Activated naive CD8-positive, alpha-beta T cell treated with anti-CD3 and anti-CD28 coated beads, Interleukin-2, amount 10 ng/mL, durations not matched to agents 7 days and 5 days (primary cell): ENCODE measurements at regions of chr10 and their contacts with region 1.

Region 1: DNA sequence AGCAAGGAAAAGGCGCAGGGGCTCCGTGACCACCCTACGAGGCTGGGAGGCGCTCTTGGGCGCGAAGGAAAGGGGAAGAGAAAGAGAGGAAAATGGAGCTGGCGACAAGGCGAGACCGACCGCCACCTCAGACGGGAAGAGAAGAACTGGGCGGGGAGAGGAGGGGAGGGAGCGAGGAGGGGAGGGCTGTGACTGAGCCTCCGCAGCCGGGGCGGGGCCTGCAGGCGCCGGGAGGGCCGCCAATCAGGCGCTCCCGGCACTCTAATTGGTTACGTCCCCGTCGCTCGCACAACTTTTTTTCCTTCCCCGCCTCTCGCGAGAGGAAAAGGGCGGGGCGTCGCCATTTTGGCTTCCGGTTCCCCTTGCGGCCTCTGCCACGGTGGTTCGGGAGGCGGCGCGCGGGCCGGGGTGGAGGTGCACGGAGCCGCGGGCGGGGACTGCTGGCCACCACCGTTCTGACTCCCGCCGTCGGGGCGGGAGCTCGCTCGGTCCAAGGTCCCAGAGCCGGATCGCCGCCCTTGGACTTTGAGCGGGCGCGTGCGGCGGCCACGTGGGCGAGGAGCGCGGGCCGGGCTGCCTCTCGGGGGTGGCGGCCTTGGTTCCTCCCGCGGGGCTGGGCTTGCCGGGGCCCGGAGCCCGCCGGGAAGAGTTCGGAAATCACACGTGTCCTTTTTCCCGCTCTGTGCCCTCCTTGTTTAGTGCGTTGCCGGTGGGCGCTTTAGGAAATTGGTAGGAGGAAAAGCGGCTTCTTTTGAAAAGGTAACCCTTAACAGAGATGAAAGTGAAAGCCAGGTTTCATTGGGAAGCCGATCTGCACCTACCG is at the start of gene GDI2:
- DNase-seq: peak; percentile 98
- ATAC-seq: peak; percentile 90
- H3K4me3 Mint-ChIP-seq: peak within 1 kb of the TSS; percentile 94
- H3K27ac Mint-ChIP-seq: peak within 1 kb of the TSS; percentile 96
- H3K4me1 Mint-ChIP-seq: peaks cover 52% of the 10 kb centered on the region
- H3K27me3 Mint-ChIP-seq: no peaks in the 10 kb centered on the region
- total RNA-seq, gene GDI2: 187 to 194 TPM

Region 2: GRCh38 chr10:5692461-5693358 is 120.8 kb before region 1 on chr10:
- POLR2A ChIA-PET with region 1: interaction called, 11 read pairs
- DNase-seq: peak; percentile 80
- ATAC-seq: peak; percentile 88
- H3K4me3 Mint-ChIP-seq: peak overlapping the region; percentile 77
- H3K27ac Mint-ChIP-seq: peak overlapping the region; percentile 74
- H3K4me1 Mint-ChIP-seq: peaks cover 31% of the 10 kb centered on the region
- H3K27me3 Mint-ChIP-seq: no peaks in the 10 kb centered on the region

Region 3: GRCh38 chr10:5776136-5776880 is 37.2 kb before region 1 on chr10:
- POLR2A ChIA-PET with region 1: interaction called, 17 read pairs
- DNase-seq: no peak
- ATAC-seq: peak; percentile 18
- H3K4me3 Mint-ChIP-seq: peak overlapping the region; percentile 78
- H3K27ac Mint-ChIP-seq: peak overlapping the region; percentile 93
- H3K4me1 Mint-ChIP-seq: peaks cover 53% of the 10 kb centered on the region
- H3K27me3 Mint-ChIP-seq: no peaks in the 10 kb centered on the region

Region 4: GRCh38 chr10:5788969-5789368 is 24.5 kb before region 1 on chr10:
- POLR2A ChIA-PET with region 1: interaction called, 10 read pairs
- DNase-seq: peak; percentile 39
- ATAC-seq: peak; percentile 77
- H3K4me3 Mint-ChIP-seq: peak overlapping the region; percentile 17
- H3K27ac Mint-ChIP-seq: peak overlapping the region; percentile 62
- H3K4me1 Mint-ChIP-seq: peaks cover 30% of the 10 kb centered on the region
- H3K27me3 Mint-ChIP-seq: no peaks in the 10 kb centered on the region

Region 5: DNA sequence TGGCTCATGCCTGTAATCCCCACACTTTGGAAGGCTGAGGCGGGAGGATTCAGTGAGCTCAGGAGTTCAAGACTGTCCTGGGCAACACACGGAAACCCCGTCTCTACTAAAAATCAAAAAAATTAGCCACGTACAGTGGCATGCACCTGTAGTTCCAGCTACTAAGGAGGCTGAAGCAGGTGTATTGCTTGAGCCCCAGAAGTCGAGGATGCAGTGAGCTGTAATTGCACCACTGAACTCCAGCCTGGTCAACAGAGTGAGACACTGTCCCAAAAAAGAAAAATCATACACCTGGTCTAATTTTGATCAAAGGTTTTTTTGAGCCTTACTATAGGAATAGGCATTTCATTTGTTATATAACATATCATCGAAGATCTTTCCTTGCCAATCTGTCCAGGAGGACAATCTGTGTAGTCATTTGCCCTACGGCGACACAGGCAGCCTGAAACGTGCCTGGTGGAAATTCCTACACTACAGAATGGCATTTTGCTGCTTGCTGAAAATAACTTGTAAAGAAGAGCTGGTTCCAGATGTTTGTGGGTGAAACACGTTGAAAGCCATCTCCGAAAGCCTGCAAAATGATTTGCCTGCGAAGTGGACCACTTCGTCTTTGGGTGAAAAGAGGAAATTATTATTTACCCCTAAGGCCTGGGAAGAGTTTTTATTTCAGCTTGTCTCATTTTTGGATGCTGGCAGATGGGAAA is 31.0 kb after region 1 on chr10:
- POLR2A ChIA-PET with region 1: interaction called, 10 read pairs
- DNase-seq: no peak
- ATAC-seq: no peak
- H3K4me3 Mint-ChIP-seq: no peak overlapping the region
- H3K27ac Mint-ChIP-seq: no peak overlapping the region
- H3K4me1 Mint-ChIP-seq: peaks cover 8% of the 10 kb centered on the region
- H3K27me3 Mint-ChIP-seq: no peaks in the 10 kb centered on the region

Region 6: GRCh38 chr10:5889624-5890451 is 76.3 kb after region 1 on chr10 and contains the starts of genes ANKRD16 and FBH1:
- POLR2A ChIA-PET with region 1: interaction called, 16 read pairs
- DNase-seq: peak; percentile 99
- ATAC-seq: peak; percentile 80
- H3K4me3 Mint-ChIP-seq: peak within 1 kb of the TSS; percentile 96
- H3K27ac Mint-ChIP-seq: peak within 1 kb of the TSS; percentile 77
- H3K4me1 Mint-ChIP-seq: peaks cover 34% of the 10 kb centered on the region
- H3K27me3 Mint-ChIP-seq: no peaks in the 10 kb centered on the region
- total RNA-seq, gene ANKRD16: 6.2 to 6.3 TPM
- total RNA-seq, gene FBH1: 71.6 to 72.9 TPM

Region 7: DNA sequence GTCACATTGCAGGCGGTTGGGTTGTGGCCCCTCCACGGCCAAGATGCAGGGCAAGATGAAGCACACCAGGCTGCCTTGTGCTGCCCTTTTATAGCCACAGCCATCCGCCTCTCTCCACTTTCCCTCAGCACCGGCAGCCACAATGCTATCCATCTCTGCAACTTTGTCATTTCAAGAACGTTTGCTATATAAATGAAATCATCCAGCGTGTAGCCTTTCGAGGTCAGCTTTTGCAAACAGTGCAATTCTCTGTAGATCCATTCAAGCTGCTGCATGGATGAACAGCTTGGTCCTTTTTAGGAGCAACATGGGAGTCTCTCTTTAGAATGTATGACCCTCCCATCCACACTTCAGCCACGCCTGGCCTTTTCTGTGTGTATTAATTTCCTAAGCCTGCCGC is 170.3 kb after region 1 on chr10:
- POLR2A ChIA-PET with region 1: no interaction called
- DNase-seq: no peak
- ATAC-seq: no peak
- H3K4me3 Mint-ChIP-seq: no peak overlapping the region
- H3K27ac Mint-ChIP-seq: no peak overlapping the region
- H3K4me1 Mint-ChIP-seq: peaks cover 10% of the 10 kb centered on the region
- H3K27me3 Mint-ChIP-seq: peaks cover 14% of the 10 kb centered on the region